Activated CD8-positive, alpha-beta T cell treated with anti-CD3 and anti-CD28 coated beads, Interleukin-2, amount 10 ng/mL, durations not matched to agents 7 days and 5 days (primary cell): ENCODE measurements at regions of chr14 and their contacts with region 1.

Region 1: GRCh38 chr14:53306267-53306721 is 153.2 kb upstream of the DDHD1 start:
- DNase-seq: peak; percentile 43
- ATAC-seq: peak; percentile 76
- H3K4me3 Mint-ChIP-seq: peak overlapping the region; percentile 55
- H3K27ac Mint-ChIP-seq: no peak overlapping the region
- H3K4me1 Mint-ChIP-seq: peaks cover 19% of the 10 kb centered on the region
- H3K27me3 Mint-ChIP-seq: peaks cover 5% of the 10 kb centered on the region

Region 2: DNA sequence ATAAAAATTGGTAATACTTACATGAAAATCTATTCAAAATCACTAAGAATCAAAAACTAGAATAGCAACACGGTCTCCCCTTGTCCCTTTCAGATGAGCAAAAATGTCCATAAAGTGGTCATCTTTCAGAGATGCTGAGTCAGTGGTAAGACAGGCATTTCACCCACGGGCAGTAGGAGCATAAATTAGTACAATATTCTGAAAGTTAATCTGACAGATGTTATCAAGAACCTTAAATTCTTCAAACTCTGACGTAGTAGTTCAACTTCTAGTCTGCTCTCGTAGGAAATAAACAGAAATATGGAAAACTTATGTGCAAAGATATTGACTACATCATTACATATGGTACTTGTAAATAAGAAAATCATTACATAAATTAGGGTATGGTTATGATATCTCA is 481.8 kb before region 1 on chr14:
- CTCF ChIA-PET with region 1: interaction called, 10 read pairs
- POLR2A ChIA-PET with region 1: no interaction called
- DNase-seq: no peak
- ATAC-seq: no peak
- H3K4me3 Mint-ChIP-seq: no peak overlapping the region
- H3K27ac Mint-ChIP-seq: no peak overlapping the region
- H3K4me1 Mint-ChIP-seq: peaks cover 1% of the 10 kb centered on the region
- H3K27me3 Mint-ChIP-seq: peaks cover 9% of the 10 kb centered on the region

Region 3: DNA sequence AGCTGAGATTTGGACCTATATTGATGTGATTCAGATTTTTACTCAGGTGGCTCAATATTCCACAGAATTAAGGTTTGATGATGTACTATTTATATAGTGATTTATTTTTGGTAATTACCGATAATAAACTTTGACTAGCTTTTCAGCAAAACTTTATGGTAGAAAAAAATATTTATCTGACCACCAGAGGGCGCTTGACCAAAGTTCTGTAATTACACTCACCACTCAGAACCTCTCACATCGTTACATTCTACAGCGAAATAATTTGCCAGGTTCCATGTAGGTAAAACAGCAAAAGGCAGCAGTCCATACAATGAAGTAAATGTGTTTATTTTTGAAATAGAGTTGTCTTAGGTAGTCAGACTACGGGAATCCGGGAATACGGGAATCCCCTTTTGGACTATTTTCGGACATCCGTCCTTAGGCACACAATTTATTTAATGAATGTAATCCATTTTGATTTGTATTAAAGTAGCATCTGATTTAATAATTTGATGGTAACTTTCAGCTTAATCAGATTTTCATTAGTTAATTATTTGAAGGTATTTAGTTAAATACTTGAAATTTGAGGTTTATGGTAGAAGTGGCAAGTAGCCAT is 10.2 kb before region 1 on chr14:
- CTCF ChIA-PET with region 1: interaction called, 28 read pairs
- POLR2A ChIA-PET with region 1: no interaction called
- DNase-seq: peak; percentile 38
- ATAC-seq: no peak
- H3K4me3 Mint-ChIP-seq: no peak overlapping the region
- H3K27ac Mint-ChIP-seq: no peak overlapping the region
- H3K4me1 Mint-ChIP-seq: no peaks in the 10 kb centered on the region
- H3K27me3 Mint-ChIP-seq: no peaks in the 10 kb centered on the region

Region 4: GRCh38 chr14:53331247-53331646 is 25.0 kb after region 1 on chr14:
- CTCF ChIA-PET with region 1: no interaction called
- POLR2A ChIA-PET with region 1: no interaction called
- DNase-seq: no peak
- ATAC-seq: no peak
- H3K4me3 Mint-ChIP-seq: no peak overlapping the region
- H3K27ac Mint-ChIP-seq: no peak overlapping the region
- H3K4me1 Mint-ChIP-seq: no peaks in the 10 kb centered on the region
- H3K27me3 Mint-ChIP-seq: no peaks in the 10 kb centered on the region

Region 5: GRCh38 chr14:53365486-53366130 is 59.3 kb after region 1 on chr14:
- CTCF ChIA-PET with region 1: no interaction called
- POLR2A ChIA-PET with region 1: no interaction called
- DNase-seq: no peak
- ATAC-seq: no peak
- H3K4me3 Mint-ChIP-seq: no peak overlapping the region
- H3K27ac Mint-ChIP-seq: no peak overlapping the region
- H3K4me1 Mint-ChIP-seq: no peaks in the 10 kb centered on the region
- H3K27me3 Mint-ChIP-seq: no peaks in the 10 kb centered on the region